Posterior vena cava (tissue), 2 donors: ENCODE measurements at regions of chr2 and their contacts with region 1.

Region 1: DNA sequence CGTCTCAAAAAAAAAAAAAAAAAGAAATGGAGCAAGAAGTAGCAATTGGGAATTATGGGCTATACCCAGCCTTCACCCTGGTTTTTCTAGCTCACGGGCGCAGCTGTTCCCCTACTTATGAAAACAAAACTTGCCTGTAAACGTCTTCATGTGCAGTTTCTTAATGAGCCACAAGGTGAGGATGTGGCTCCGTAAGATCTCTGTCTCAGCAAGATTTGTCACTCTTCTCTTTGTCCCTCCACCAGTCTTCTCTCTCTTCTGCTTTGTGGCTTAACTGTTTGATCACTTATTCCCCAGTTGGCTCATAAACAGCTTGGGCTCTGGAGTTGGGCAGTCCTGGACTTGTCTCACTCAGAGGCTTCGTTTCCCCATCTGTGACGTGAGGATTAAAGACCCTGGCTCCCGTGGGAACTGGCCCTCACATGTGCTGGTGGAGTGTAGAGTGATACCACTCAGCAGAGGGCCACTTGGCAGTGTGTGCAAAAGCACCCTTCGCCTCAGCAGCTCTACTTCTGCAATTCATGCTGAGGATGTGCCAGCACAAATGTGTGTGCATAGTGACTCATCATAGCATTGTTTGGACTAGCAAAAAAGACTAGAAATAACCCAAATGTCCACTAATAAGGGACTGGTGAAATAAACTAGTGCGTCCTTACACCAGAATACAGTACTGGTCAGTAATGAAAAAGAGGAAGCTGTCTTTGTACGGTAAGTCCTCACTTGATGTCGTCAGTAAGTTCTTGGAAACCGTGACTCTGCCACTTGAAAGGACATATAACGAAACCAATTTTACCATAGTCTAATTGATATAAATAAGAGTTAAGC is 8.7 kb downstream of the CEP68 start:
- DNase-seq: peak; percentile 93

Region 2: GRCh38 chr2:65177751-65178442 is 113.0 kb after region 1 on chr2:
- intact Hi-C with region 1: loop called (anchors 10 kb)
- DNase-seq: no peak

Region 3: GRCh38 chr2:65186872-65187851 is 122.2 kb after region 1 on chr2:
- intact Hi-C with region 1: loop called in 1 of 2 experiments (anchors 10 kb)
- DNase-seq: peak; percentile 90

Region 4: DNA sequence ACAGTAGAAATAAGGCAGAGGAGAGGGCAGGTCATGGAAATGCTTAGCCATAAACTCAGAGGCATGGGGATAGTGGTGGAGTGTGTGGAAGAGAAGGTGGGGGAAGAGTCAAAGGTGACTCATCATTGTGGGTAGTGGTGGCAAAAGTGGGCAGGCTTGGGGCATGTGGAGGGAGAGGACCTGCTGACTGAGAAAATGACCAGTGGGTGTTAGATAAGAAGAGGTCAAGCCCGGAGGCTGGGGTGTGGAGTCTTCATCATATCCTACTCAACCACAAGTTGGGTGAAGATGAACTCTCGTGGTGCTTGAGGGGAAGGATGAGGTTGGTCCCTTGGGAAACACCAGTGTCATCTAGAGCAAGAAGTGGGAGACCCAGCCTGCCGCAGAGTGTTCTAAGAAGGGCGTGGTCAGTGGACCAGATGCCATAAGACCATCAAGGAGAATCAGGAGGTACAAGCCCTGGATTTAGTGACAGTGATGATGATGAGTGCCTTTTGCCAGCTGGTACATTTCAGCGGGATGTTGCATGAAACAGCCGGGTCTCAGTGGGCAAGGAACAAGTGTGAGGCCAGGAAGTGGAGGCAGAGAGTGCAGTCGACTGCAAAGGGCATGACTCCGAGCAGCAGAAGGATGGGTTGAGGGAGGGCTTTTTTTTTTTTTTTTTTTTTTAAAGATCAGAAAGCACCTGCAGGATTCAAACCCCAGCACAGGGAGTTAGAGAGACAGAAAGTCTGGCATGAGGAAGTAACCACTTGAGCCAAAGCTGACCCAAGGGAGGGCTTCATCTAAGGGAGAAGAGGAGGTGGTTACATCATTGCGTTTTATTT is 490.0 kb after region 1 on chr2:
- intact Hi-C with region 1: loop called in 1 of 2 experiments (anchors 10 kb)
- DNase-seq: no peak

Region 5: DNA sequence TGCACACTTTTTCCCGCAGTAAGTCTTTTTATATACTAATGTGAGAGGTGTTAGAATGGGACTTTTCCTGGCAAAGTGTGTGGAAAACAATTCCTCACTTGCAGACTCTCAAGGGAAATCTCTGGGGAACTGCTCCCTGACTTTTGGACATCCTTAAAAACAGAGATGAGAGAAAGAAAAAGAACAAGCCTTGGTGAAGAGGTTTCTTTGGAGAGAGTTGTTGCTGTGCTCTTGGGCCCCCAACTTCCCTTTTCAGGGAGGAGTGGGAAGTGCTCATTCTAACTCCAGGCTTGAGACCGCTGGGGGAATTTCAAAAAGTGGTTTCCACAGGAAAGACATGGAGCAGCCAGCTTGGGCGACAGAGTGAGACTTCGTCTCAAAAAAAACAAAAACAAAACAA is 510.1 kb after region 1 on chr2:
- intact Hi-C with region 1: loop called in 1 of 2 experiments (anchors 5 kb)
- DNase-seq: no peak